ENCODE measurements at regions of chr1 and their contacts with region 1.

Region 1: DNA sequence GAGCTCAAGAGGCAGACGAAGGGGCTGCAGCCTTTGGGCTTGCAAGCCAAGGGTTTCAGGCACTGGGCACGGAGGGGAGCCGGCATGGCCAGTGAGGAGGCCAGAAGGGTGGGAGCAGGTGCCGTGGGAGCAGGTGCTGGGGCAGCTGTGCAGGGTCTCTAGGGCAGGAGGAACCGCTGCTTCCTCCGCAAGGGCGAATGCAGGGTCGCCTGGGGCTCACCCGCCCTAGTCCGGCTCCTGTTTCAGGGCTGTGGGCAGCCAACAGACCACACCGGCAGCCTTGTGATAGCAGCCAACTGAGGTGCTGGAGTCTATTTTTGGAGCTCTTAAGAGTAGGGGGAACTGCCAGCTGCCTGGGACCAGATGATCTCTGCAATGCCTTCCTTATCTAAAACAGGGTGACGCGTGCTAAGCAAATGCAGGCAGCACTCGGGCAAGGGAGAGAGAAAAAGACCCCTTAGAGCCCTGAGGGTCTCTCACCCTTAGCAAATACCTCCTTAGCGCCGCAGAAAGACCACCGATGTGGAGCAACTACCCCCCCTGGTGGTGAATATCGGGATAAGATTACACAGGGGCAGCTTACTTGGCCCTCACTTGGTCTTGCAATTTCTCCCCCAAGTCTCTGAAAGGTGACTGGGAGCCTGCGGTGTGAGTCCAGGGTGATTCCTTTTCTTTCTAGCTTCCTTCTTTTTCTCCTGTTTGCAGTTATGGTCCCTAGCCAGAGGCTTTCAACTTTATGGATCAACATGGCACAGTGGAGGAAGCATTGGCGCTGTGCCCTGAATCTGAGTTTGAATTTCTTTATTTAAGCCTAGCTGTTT is 20.7 kb upstream of the MAPKAPK2 start:
- DNase-seq: peak; percentile 76
- H3K4me3 Mint-ChIP-seq: no peak overlapping the region
- H3K27ac Mint-ChIP-seq: no peak overlapping the region
- H3K4me1 Mint-ChIP-seq: peaks cover 20% of the 10 kb centered on the region
- H3K27me3 Mint-ChIP-seq: peaks cover 68% of the 10 kb centered on the region

Region 2: GRCh38 chr1:206461602-206462455 is 202.2 kb before region 1 on chr1:
- CTCF ChIA-PET with region 1: interaction called, 15 read pairs
- DNase-seq: peak; percentile 87
- H3K4me3 Mint-ChIP-seq: no peak overlapping the region
- H3K27ac Mint-ChIP-seq: no peak overlapping the region
- H3K4me1 Mint-ChIP-seq: peaks cover 41% of the 10 kb centered on the region
- H3K27me3 Mint-ChIP-seq: no peaks in the 10 kb centered on the region

Region 3: DNA sequence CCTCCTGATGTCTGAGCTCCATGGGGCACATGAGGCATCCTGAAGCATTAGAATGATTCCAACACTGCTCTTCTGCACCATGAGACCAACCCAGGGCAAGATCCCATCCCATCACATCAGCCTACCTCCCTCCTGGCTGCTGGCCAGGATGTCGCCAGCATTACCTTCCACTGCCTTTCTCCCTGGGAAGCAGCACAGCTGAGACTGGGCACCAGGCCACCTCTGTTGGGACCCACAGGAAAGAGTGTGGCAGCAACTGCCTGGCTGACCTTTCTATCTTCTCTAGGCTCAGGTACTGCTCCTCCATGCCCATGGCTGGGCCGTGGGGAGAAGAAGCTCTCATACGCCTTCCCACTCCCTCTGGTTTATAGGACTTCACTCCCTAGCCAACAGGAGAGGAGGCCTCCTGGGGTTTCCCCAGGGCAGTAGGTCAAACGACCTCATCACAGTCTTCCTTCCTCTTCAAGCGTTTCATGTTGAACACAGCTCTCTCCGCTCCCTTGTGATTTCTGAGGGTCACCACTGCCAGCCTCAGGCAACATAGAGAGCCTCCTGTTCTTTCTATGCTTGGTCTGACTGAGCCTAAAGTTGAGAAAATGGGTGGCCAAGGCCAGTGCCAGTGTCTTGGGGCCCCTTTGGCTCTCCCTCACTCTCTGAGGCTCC is 167.8 kb before region 1 on chr1:
- CTCF ChIA-PET with region 1: interaction called, 12 read pairs
- DNase-seq: no peak
- H3K4me3 Mint-ChIP-seq: no peak overlapping the region
- H3K27ac Mint-ChIP-seq: no peak overlapping the region
- H3K4me1 Mint-ChIP-seq: no peaks in the 10 kb centered on the region
- H3K27me3 Mint-ChIP-seq: no peaks in the 10 kb centered on the region

Region 4: GRCh38 chr1:206612129-206612876 is 51.7 kb before region 1 on chr1 and contains the start of gene EIF2D:
- CTCF ChIA-PET with region 1: interaction called, 100 read pairs
- DNase-seq: peak; percentile 94
- H3K4me3 Mint-ChIP-seq: peak within 1 kb of the TSS; percentile 81
- H3K27ac Mint-ChIP-seq: peak within 1 kb of the TSS; percentile 86
- H3K4me1 Mint-ChIP-seq: peaks cover 30% of the 10 kb centered on the region
- H3K27me3 Mint-ChIP-seq: peaks cover 18% of the 10 kb centered on the region

Region 5: GRCh38 chr1:206651958-206652890 is 11.8 kb before region 1 on chr1:
- CTCF ChIA-PET with region 1: interaction called, 39 read pairs
- DNase-seq: no peak
- H3K4me3 Mint-ChIP-seq: no peak overlapping the region
- H3K27ac Mint-ChIP-seq: no peak overlapping the region
- H3K4me1 Mint-ChIP-seq: no peaks in the 10 kb centered on the region
- H3K27me3 Mint-ChIP-seq: peaks cover 14% of the 10 kb centered on the region

Region 6: GRCh38 chr1:206716870-206717673 is 53.0 kb after region 1 on chr1:
- CTCF ChIA-PET with region 1: interaction called, 10 read pairs
- DNase-seq: peak; percentile 51
- H3K4me3 Mint-ChIP-seq: no peak overlapping the region
- H3K27ac Mint-ChIP-seq: peak overlapping the region; percentile 66
- H3K4me1 Mint-ChIP-seq: peaks cover 74% of the 10 kb centered on the region
- H3K27me3 Mint-ChIP-seq: no peaks in the 10 kb centered on the region

Region 7: DNA sequence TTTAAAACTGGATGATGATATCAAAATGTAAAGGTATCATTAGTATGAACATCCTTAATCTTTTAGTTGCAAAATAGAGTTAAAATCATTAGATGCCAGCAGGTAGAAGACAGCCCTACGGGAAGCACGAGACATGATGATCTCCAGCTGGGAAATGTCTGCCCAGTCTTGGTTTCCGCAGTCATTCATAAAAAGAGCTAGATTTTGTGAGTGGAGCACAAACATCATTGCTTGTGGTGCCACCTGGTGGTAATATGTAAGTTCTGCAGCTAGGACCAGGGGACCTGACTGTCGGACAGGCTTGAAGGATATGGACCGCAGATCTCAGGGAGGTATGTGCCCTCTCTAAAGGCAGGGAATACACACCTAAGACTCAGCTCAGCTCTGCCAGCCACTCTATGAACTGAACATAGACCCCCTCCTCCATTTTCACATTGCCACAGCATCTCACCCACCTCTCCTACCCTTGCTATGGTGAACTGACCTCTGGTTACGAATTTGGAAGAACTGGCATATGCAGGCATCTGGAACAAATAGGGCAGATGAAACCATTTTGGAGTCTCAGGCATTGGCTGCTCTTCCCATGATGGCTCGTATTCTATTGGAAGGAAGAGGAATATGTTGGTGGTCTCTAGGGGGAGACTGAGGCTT is 248.5 kb after region 1 on chr1:
- CTCF ChIA-PET with region 1: interaction called, 19 read pairs
- DNase-seq: peak; percentile 75
- H3K4me3 Mint-ChIP-seq: no peak overlapping the region
- H3K27ac Mint-ChIP-seq: peak overlapping the region; percentile 28
- H3K4me1 Mint-ChIP-seq: peaks cover 91% of the 10 kb centered on the region
- H3K27me3 Mint-ChIP-seq: no peaks in the 10 kb centered on the region

Measured in activated naive CD4-positive, alpha-beta T cell treated with anti-CD3 and anti-CD28 coated beads, Interleukin-2, amount 10 ng/mL, durations not matched to agents 7 days and 5 days (primary cell).